AG04449 (cell line): ENCODE measurements at regions of chr3 and their contacts with region 1.

Region 1: GRCh38 chr3:195197765-195198425 is 73.1 kb downstream of the XXYLT1 start:
- DNase-seq: peak; percentile 74
- H3K4me3 ChIP-seq: no peak overlapping the region
- CTCF ChIP-seq: no peak

Region 2: GRCh38 chr3:195187609-195188425 is 10.1 kb before region 1 on chr3:
- CTCF ChIA-PET with region 1: interaction called, 21 read pairs
- POLR2A ChIA-PET with region 1: interaction called, 5 read pairs
- DNase-seq: no peak
- H3K4me3 ChIP-seq: no peak overlapping the region
- CTCF ChIP-seq: no peak

Region 3: GRCh38 chr3:195207731-195208585 is 10.1 kb after region 1 on chr3:
- CTCF ChIA-PET with region 1: interaction called, 24 read pairs
- POLR2A ChIA-PET with region 1: interaction called, 3 read pairs
- DNase-seq: no peak
- H3K4me3 ChIP-seq: no peak overlapping the region
- CTCF ChIP-seq: no peak

Region 4: DNA sequence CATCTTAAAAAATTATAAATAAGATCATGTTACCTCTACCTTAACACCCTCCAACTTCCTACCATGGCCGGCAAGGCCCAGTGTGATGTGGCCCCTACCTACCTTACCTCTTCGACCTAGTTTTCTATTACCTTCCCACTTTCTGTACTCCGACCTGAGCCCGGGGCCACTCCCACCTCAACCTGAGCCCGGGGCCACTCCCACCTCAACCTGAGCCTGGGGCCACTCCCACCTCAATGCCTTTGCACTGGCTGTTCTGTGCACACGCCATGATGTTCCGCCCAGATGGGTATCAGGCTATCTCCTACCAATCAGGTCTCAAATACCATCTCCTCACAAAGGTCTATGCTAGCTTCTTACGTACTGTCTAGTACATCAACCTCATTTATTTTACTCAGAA is 139.9 kb after region 1 on chr3:
- CTCF ChIA-PET with region 1: no interaction called
- POLR2A ChIA-PET with region 1: no interaction called
- DNase-seq: no peak
- H3K4me3 ChIP-seq: no peak overlapping the region
- CTCF ChIP-seq: no peak